CD8-positive, alpha-beta T cell (primary cell): ENCODE measurements at regions of chr2 and their contacts with region 1.

Region 1: GRCh38 chr2:63692002-63692606 is 103.3 kb downstream of the MDH1 start:
- DNase-seq: peak in 4 of 9 experiments; percentile 5 to 68 (median 33)
- ATAC-seq: peak; percentile 68
- H3K4me3 ChIP-seq: no peak overlapping the region
- H3K4me3 Mint-ChIP-seq: no peak overlapping the region
- H3K27ac ChIP-seq: no peak overlapping the region
- H3K27ac Mint-ChIP-seq: no peak overlapping the region
- H3K4me1 ChIP-seq: no peaks in the 10 kb centered on the region
- H3K4me1 Mint-ChIP-seq: no peaks in the 10 kb centered on the region
- H3K27me3 ChIP-seq: no peaks in the 10 kb centered on the region
- H3K27me3 Mint-ChIP-seq: no peaks in the 10 kb centered on the region
- CTCF ChIP-seq: peak; percentile 82

Region 2: GRCh38 chr2:63796366-63796765 is 104.3 kb after region 1 on chr2:
- CTCF ChIA-PET with region 1: no interaction called
- POLR2A ChIA-PET with region 1: no interaction called
- intact Hi-C with region 1: no loop called
- DNase-seq: no peak
- ATAC-seq: no peak
- H3K4me3 ChIP-seq: no peak overlapping the region
- H3K4me3 Mint-ChIP-seq: no peak overlapping the region
- H3K27ac ChIP-seq: no peak overlapping the region
- H3K27ac Mint-ChIP-seq: no peak overlapping the region
- H3K4me1 ChIP-seq: no peaks in the 10 kb centered on the region
- H3K4me1 Mint-ChIP-seq: no peaks in the 10 kb centered on the region
- H3K27me3 ChIP-seq: no peaks in the 10 kb centered on the region
- H3K27me3 Mint-ChIP-seq: no peaks in the 10 kb centered on the region
- CTCF ChIP-seq: no peak

Region 3: DNA sequence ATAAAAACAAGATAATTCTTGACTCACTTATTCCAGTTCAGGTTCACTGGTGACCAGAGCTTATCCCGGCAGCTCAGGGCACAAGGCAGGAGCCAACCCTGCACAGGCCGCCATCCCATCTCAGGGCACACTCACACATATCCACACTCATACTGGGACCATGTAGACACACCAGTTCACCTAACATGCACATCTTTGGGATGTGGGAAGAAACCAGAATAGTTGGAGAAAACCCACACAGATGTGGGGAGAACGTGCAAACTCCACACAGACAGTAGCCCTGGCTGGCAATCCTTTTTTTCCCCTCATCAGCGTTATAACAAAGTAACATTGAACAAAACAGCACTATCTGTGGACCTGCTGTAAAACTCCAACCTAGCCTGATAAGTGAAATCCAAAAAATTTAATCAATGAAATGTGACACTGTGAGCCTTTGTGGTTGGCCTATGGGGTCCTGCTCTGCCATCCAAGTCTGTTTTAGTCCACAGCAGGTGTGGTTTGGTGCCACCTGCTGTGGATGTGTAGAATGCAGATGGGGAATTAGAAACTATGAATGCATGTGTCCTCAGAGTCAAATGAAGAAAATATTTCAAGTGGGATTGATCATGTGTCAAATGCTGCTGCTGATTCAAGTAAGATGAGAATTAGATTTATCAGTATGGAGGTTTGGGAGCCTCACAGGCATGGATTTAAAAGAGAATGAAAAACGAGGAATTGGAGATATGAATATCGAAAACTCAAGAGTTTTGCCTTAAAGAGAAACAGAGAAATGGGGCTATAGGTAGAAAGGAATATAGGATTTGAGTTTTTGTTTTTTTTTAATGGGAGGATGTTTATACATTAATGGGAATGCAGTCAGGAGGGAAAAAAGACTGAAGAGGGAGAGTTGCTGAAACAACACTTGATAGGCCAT is 196.6 kb after region 1 on chr2:
- CTCF ChIA-PET with region 1: no interaction called
- POLR2A ChIA-PET with region 1: no interaction called
- intact Hi-C with region 1: loop called (anchors 1 kb)
- DNase-seq: peak in 7 of 9 experiments; percentile 3 to 63 (median 35)
- ATAC-seq: peak; percentile 77
- H3K4me3 ChIP-seq: no peak overlapping the region
- H3K4me3 Mint-ChIP-seq: no peak overlapping the region
- H3K27ac ChIP-seq: no peak overlapping the region
- H3K27ac Mint-ChIP-seq: peak overlapping the region; percentile 30
- H3K4me1 ChIP-seq: no peaks in the 10 kb centered on the region
- H3K4me1 Mint-ChIP-seq: peaks cover 4% of the 10 kb centered on the region
- H3K27me3 ChIP-seq: no peaks in the 10 kb centered on the region
- H3K27me3 Mint-ChIP-seq: no peaks in the 10 kb centered on the region
- CTCF ChIP-seq: peak; percentile 71

Region 4: DNA sequence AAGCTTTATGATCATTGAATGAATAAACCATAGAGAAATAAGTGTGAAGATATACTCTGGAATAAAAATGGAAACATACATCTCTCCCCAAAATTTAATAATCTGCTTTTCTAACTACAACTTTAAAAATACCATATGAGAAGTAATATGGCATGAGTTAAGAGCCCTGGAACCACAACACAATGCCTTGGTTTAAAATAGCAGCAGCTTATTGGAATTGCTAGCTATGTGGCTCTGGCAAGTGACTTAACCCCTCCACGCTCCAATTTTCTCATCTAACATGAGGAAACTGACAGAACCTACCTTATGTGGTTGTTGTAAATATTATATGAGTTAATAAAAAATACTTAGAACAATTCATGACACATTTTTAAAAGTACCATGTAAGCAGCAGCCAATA is 250.7 kb after region 1 on chr2:
- CTCF ChIA-PET with region 1: no interaction called
- POLR2A ChIA-PET with region 1: no interaction called
- intact Hi-C with region 1: no loop called
- DNase-seq: no peak
- ATAC-seq: no peak
- H3K4me3 ChIP-seq: no peak overlapping the region
- H3K4me3 Mint-ChIP-seq: no peak overlapping the region
- H3K27ac ChIP-seq: no peak overlapping the region
- H3K27ac Mint-ChIP-seq: no peak overlapping the region
- H3K4me1 ChIP-seq: no peaks in the 10 kb centered on the region
- H3K4me1 Mint-ChIP-seq: no peaks in the 10 kb centered on the region
- H3K27me3 ChIP-seq: no peaks in the 10 kb centered on the region
- H3K27me3 Mint-ChIP-seq: no peaks in the 10 kb centered on the region
- CTCF ChIP-seq: no peak

Region 5: DNA sequence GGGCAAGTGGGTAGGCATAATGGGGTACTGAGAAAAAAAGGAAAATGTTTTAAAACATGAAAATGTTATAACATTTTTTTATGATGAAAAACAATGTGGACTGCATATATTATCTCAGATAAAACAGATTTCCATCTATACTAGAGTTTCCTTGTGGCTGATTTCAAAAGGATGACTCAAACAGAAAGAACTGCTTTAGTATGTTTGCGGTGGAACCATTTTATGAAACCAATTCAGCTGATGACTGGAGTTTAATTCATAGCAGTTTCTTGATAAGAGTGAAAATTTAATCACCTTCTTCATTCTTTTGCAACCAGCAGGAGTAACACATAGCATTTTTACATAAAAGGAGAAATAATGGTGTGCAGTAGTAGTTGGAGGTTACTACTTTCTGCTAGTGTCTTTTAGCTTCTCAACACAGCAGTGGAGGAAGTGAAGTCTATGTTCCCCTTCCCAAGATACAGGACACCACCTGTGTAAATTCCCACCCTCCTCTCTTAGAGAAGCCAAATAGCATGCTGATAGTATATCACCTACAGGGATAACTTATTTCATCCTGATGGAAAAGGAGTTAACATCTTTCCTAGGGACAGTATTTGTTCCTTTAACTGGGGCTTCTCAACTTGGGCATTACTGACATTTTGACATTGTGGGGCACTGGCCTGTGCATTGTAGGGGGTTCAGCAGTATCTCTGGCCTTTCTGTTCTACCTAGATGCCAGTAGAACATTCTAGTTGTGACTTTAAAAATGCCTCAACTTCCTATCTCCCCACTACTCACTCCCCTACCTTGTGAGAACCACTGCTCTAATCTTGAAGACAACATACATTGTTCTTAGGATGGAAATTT is 422.2 kb after region 1 on chr2:
- CTCF ChIA-PET with region 1: no interaction called
- POLR2A ChIA-PET with region 1: no interaction called
- intact Hi-C with region 1: no loop called
- DNase-seq: peak in 2 of 9 experiments; percentile 14 to 41
- ATAC-seq: peak; percentile 73
- H3K4me3 ChIP-seq: no peak overlapping the region
- H3K4me3 Mint-ChIP-seq: peak overlapping the region; percentile 12
- H3K27ac ChIP-seq: no peak overlapping the region
- H3K27ac Mint-ChIP-seq: peak overlapping the region; percentile 19
- H3K4me1 ChIP-seq: peaks cover 29% of the 10 kb centered on the region
- H3K4me1 Mint-ChIP-seq: peaks cover 74% of the 10 kb centered on the region
- H3K27me3 ChIP-seq: no peaks in the 10 kb centered on the region
- H3K27me3 Mint-ChIP-seq: no peaks in the 10 kb centered on the region
- CTCF ChIP-seq: no peak